ENCODE measurements at regions of chr16 and their contacts with region 1.

Region 1: GRCh38 chr16:66382171-66382965 is 15.9 kb downstream of the CDH5 start:
- DNase-seq: peak; percentile 68 to 97
- H3K4me3 ChIP-seq: peak overlapping the region; percentile 23; the same call in 1 of the 2 replicates
- H3K27ac ChIP-seq: peak overlapping the region; percentile 96
- H3K4me1 ChIP-seq: peaks cover 68% of the 10 kb centered on the region
- H3K27me3 ChIP-seq: no peaks in the 10 kb centered on the region
- CTCF ChIP-seq: 0 out of 2 replicates have a peak, but pooled peaks have one; percentile 15

Region 2: DNA sequence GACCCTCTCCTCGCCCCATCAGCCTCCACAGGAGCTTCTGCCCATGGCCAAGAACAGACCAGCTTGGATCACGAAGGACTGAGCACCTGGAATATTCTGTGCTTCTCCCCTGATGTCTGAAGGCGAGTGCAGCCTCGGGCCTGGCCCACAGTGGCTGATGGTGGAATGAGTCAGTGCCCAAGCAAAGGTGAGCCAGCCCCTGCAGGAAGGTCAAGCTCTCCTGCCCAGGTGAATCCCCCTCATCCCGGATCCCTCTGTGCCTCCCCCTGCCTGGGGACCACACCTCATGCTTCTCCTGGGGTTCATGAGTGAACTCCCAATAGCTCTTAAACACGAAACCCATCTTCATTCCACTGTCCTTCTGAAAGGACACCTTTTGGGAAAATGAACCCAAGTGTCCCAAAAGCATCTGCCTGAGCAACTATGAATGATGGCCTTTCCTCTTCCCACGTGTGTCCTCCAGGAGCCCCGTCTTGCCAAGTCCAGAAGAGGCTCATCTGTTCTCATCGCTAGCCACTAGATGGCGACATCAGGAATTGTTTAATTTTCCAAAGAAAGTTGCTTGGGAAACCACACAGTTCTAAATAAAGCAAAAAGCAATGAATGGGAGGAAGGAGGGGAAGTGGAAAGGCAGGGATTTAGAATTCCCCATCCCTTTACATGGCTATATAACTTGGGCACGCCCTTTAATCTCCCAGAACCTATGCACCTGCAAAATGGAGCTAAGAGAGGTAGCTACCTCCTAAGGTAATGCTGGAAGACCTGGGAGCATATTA is 25.0 kb before region 1 on chr16:
- CTCF ChIA-PET with region 1: interaction called, 4 read pairs
- POLR2A ChIA-PET with region 1: interaction called, 7 read pairs
- intact Hi-C with region 1: loop called (anchors 2 kb)
- DNase-seq: peak; percentile 59 to 68
- H3K4me3 ChIP-seq: no peak overlapping the region
- H3K27ac ChIP-seq: no peak overlapping the region
- H3K4me1 ChIP-seq: peaks cover 36% of the 10 kb centered on the region
- H3K27me3 ChIP-seq: no peaks in the 10 kb centered on the region
- CTCF ChIP-seq: peak; percentile 85

Measured in PC-9 (cell line).